ENCODE measurements at regions of chr14 and their contacts with region 1.

Region 1: DNA sequence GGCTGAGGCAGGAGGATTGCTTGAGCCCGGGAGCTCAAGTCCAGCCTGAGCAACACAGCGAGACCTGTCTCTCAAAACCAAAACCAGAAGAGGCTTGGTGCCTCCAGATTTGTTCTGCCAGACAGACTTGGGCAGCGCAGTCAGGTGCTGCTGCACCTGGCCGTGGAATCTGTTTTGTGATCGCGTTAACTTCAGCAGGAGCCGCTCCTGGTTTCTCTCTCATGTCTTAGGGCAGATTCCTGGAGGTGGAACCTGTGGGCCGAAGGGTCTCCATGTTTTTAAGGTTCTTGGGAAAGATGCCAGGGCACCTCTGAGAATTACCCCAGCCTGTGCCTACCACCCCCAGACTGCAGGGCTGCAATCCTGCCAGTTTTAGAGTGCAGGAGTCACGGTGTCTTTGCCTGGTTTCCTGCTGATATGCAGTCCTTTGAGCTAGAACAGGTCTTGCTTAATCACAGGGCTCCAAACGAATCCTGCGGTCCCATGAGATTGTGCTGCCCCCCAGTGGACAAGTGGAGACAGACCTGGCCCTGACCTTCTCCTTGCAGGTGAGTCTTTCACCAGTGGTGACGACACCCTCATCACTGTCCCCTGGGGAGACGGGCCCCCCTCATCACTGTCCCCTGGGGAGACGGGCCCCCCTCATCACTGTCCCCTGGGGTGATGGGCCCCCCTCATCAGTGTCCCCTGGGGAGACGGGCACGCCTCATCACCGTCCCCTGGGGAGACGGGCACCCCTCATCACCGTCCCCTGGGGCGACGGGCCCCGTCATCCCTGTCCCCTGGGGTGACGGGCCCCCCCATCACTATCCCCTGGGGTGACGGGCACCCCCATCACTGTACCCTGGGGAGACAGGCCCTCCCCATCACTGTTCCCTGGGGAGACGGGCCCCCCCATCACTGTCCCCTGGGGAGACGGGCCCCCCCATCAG is 37.6 kb downstream of the PACS2 start:
- DNase-seq: peak; percentile 79
- H3K4me3 ChIP-seq: no peak overlapping the region
- H3K27ac ChIP-seq: peak overlapping the region; percentile 67
- H3K4me1 ChIP-seq: peaks cover 17% of the 10 kb centered on the region
- H3K27me3 ChIP-seq: no peaks in the 10 kb centered on the region
- CTCF ChIP-seq: peak; percentile 88

Region 2: DNA sequence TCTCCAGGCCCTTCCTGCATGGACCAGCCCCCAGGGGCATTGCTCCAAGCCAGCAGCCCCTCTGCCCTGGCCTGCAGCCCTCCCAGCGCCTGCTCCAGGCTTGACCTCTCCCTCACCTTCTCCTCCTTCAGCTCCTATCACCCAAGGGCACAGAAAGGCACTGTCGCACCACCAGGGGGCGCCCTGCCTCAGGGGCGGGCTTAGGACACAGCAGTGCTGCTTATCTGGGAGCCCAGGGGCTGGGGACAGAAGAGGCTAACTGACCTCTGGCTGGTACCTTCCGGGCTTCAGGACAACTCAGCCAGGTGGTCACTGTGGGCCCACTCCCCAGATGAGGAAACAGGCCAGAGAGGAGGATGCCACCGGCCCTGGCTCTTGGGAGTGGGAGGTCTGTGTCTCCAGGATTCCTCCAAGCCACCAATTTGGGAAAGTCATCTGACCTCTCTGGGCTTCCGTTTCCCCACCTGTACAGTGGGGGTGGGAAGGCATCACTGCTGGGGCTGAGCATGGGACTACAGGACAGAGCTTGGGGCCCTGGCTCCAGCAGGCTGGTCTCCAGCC is 261.6 kb before region 1 on chr14:
- intact Hi-C with region 1: loop called (anchors 10 kb)
- DNase-seq: peak; percentile 87
- H3K4me3 ChIP-seq: no peak overlapping the region
- H3K27ac ChIP-seq: peak overlapping the region; percentile 91
- H3K4me1 ChIP-seq: peaks cover 79% of the 10 kb centered on the region
- H3K27me3 ChIP-seq: peaks cover 6% of the 10 kb centered on the region
- CTCF ChIP-seq: peak; percentile 96

Region 3: DNA sequence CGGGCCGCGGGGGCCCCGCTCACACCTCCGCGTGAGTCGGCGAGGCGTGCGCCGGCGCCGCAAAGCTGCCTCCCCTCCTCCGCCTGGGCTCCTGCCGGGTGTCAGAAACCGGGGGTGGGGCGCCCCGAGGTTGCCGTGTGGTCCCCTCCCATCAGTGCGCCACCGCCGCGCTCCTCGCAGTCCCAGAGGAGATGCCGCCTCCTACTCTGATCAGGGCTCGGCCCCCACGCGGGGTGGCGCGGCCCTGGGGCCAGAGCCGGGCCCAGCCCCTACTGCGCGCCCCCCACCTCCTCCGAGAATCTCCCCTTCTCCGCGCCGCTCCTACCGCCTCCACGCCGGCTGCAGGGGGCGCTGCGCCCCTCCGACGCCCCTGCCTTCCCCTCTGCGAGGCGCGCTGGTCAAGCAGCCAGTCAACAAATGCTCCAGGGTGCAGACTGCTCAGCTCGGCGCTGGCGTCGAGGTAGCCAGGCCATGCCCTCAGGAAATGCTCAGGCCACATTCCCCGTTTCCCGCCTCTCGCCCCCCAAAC is 183.1 kb before region 1 on chr14:
- intact Hi-C with region 1: no loop called
- DNase-seq: no peak
- H3K4me3 ChIP-seq: peak overlapping the region; percentile 62
- H3K27ac ChIP-seq: peak overlapping the region; percentile 87
- H3K4me1 ChIP-seq: peaks cover 64% of the 10 kb centered on the region
- H3K27me3 ChIP-seq: peaks cover 36% of the 10 kb centered on the region
- CTCF ChIP-seq: peak; percentile 65